ENCODE measurements at regions of chr11 and their contacts with region 1.

Region 1: DNA sequence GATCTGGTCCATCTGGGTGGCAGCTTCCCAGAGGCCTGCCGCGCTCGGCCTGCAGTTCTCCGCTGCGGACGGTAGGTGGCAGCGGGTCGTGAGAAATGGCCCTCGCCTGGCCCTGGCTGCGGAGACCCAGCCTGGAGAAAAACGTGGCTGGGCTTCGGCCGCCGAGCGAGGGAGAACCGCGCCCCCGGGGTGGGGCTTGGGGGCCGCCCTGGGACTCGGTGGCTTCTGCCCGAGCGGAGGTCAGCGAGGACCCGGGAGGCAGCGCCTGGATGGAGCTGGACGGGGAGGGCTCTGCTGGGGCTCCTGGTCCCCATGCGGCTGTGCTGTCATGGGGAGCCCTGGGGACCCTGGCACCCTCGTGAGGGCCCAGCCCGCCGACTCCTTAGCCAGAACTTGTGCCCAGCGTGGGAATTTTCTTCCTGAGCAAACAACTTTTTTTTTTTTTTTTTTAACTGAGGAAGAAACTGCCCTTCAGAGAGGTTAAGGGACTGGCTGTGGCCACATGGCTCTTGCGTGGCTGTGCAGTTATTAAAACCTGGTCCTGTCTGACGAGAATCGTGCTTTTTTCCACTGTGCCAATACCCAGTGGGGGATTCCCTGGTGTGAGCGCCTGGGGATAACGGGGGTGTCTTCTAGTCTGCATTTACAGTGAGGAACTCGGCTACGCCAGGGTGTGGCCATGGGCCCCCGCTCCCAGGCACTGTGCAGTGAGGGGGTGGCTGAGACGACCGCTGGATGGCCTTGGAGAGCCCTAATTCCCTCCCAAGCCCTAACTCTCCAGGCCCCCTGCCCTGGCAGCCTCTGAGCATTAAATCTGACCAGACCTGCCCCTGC is 535.6 kb downstream of the INSC start:
- DNase-seq: peak; percentile 95
- ATAC-seq: peak; percentile 98

Region 2: GRCh38 chr11:15590132-15590531 is 60.2 kb before region 1 on chr11:
- intact Hi-C with region 1: no loop called
- DNase-seq: no peak
- ATAC-seq: no peak

Region 3: GRCh38 chr11:15707971-15708370 is 57.6 kb after region 1 on chr11:
- intact Hi-C with region 1: no loop called
- DNase-seq: peak; percentile 65
- ATAC-seq: peak; percentile 92

Region 4: GRCh38 chr11:16613512-16614381 is 963.4 kb after region 1 on chr11:
- intact Hi-C with region 1: loop called (anchors 5 kb)
- DNase-seq: peak; percentile 94
- ATAC-seq: peak; percentile 97

Measured in sciatic nerve (tissue), 2 donors.